Ovary (tissue), 10 donors: ENCODE measurements at regions of chr5 and their contacts with region 1.

Region 1: GRCh38 chr5:111948092-111948841 is 191.3 kb upstream of the NREP start:
- DNase-seq: no peak
- H3K4me3 ChIP-seq: no peak overlapping the region
- H3K27ac ChIP-seq: no peak overlapping the region
- H3K4me1 ChIP-seq: no peaks in the 10 kb centered on the region
- H3K27me3 ChIP-seq: peaks cover 2% of the 10 kb centered on the region
- CTCF ChIP-seq: no peak
- EP300 ChIP-seq: no peak
- POLR2A ChIP-seq: no peak

Region 2: DNA sequence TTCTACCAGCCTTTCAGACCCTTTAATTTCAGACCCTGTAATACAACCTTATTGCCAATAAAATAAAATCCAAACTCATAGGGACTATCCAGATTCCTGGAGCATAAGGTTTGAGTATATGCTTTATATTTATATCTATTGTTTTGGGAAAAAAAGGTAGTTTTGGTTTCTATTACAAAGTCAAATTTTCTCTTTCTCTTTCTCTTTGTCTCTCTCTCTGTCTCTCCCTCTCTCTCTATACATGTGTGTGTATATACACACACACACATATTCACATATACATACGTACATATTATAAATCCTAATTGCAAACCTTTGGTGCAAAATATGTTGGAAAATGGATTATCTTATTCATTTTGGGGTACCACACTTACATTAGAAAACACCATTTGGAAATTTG is 1260.8 kb before region 1 on chr5:
- intact Hi-C with region 1: loop called in 1 of 4 experiments (anchors 10 kb)
- DNase-seq: no peak
- H3K4me3 ChIP-seq: no peak overlapping the region
- H3K27ac ChIP-seq: no peak overlapping the region
- H3K4me1 ChIP-seq: no peaks in the 10 kb centered on the region
- H3K27me3 ChIP-seq: no peaks in the 10 kb centered on the region
- CTCF ChIP-seq: no peak
- EP300 ChIP-seq: no peak
- POLR2A ChIP-seq: no peak

Region 3: DNA sequence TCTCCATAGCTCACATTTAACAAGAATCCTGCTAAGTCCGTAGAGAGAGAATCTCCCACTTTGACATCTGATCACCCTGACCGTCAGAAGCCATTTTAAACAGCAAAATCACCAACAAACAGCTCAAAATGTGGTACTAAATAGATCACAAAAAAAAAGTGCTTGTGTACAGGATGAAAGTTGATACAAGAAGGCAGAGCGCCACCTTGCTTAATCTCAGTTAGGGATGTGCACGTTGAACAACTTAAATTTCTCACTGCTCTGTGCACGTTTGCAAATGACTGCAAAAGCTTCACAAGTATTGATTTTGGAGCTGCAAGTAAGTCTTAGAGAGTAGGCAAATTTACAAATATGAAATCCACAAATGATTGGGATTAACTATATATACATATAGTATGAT is 128.2 kb before region 1 on chr5:
- intact Hi-C with region 1: no loop called
- DNase-seq: no peak
- H3K4me3 ChIP-seq: no peak overlapping the region
- H3K27ac ChIP-seq: no peak overlapping the region
- H3K4me1 ChIP-seq: no peaks in the 10 kb centered on the region
- H3K27me3 ChIP-seq: no peaks in the 10 kb centered on the region
- CTCF ChIP-seq: no peak
- EP300 ChIP-seq: no peak
- POLR2A ChIP-seq: no peak